CD4-positive, alpha-beta T cell (primary cell): ENCODE measurements at regions of chr9 and their contacts with region 1.

Region 1: DNA sequence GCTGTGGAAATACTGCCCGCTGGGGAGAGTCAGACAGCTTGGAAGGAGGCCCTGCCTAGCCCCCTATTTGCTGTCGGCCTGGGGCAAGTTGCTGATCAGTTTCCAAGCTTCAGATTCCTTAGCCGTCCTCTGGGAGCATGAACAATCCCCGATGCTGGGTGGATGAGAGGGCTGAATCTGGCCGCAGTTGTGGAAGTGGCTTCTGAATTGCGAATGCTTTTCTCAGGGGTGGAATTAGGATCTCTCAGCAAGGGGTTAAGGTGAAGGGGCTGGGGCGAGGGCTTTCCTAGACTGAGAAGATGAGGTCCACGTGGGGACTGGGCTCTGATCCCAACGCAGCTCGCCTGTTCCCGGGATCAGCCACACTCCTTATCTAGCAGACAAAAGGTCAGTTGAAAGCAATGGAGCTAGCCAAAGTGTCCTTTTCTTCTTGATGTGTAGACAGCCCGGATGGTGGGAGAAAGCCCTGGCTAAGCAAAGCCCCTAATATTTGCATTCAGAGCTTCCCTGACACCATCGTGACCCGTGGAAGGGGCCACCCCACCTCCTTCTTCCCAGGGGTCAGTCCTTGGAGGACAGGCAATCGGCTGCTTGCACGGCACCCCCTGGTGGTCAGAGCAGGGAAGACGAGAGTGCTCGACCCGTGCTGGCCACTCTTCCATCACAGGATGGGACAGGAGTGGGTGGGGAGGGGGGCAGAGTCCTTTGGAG is 54.9 kb downstream of the COL15A1 start:
- DNase-seq: peak; percentile 23 to 70 (median 42)
- ATAC-seq: peak; percentile 46
- H3K4me3 ChIP-seq: no peak overlapping the region
- H3K4me3 Mint-ChIP-seq: no peak overlapping the region
- H3K27ac ChIP-seq: no peak overlapping the region
- H3K27ac Mint-ChIP-seq: no peak overlapping the region
- H3K4me1 ChIP-seq: peaks cover 20% of the 10 kb centered on the region
- H3K4me1 Mint-ChIP-seq: peaks cover 26% of the 10 kb centered on the region
- H3K27me3 ChIP-seq: no peaks in the 10 kb centered on the region
- H3K27me3 Mint-ChIP-seq: no peaks in the 10 kb centered on the region
- CTCF ChIP-seq: peak; percentile 72

Region 2: DNA sequence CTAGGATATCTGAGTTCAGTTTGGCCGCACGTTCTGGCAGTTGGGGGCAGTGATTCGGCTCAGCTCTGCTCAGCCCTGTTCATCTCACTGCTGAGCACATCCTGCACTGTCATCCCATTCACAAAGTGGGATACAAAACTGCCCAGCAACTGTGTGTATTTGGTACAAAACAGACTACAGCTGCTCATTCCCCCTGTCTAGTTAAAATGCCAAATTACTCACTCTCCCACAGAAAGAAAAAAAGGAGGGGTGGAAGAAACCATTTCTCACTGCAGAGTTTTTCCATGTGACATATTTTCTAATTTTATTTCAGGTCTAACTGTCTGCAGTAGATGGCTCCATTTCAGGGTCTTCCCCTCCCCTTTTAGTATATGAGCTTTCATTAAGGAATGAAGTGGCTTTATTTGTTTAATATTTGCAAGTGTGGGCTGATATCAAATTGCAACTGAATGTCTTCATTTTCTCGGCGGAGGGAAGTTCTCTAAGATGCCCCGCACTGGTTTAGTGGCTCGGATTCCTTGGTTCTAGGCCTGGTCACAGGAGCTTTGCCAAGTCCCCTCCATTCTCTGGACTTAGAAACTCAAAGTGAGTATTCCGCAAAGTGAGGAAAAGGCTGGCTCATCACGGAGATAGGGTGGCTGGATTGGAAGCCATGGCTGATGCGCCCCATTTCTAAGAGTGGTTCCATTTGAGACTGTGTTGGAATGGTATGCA is 40.2 kb before region 1 on chr9:
- CTCF ChIA-PET with region 1: no interaction called
- POLR2A ChIA-PET with region 1: no interaction called
- intact Hi-C with region 1: no loop called
- DNase-seq: no peak
- ATAC-seq: no peak
- H3K4me3 ChIP-seq: no peak overlapping the region
- H3K4me3 Mint-ChIP-seq: no peak overlapping the region
- H3K27ac ChIP-seq: no peak overlapping the region
- H3K27ac Mint-ChIP-seq: no peak overlapping the region
- H3K4me1 ChIP-seq: no peaks in the 10 kb centered on the region
- H3K4me1 Mint-ChIP-seq: no peaks in the 10 kb centered on the region
- H3K27me3 ChIP-seq: no peaks in the 10 kb centered on the region
- H3K27me3 Mint-ChIP-seq: peaks cover 9% of the 10 kb centered on the region
- CTCF ChIP-seq: no peak

Region 3: DNA sequence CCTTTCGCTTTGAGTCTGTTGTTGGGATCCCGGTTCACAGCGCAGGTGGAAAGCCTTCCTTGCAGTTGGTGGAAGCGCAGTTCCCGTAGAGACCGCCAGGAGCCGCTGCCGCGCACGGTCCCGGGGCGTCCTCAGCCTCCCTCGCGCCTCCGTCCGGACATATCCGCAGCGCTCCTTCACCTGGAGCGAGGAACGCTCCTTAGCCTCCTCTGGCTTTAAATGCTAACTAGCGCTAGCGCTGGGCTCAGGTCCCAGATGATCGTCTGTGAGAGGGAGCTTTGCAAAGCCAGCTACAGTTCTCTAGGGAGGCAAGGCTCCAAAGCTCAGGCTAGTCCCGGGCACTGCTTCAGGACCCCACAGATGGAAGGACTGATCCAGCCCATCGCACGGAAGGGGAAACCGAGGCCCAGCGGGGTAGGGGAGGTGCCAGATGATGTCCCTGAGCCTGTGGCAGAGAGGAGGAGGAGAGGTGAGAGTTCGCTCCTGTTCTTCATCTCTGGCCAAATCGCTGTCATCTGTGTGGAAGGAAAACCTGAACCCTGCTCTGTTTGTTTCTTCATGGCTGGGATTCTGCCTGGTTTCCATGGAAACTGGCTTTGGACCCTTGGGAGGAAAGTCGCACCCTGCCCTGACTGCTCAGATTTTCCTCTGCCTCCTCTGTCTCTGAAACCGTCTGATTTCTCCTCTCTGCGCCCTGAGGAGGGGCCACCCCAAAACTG is 23.4 kb before region 1 on chr9:
- CTCF ChIA-PET with region 1: no interaction called
- POLR2A ChIA-PET with region 1: no interaction called
- intact Hi-C with region 1: loop called (anchors 1 to 2 kb)
- DNase-seq: peak; percentile 58 to 87 (median 74)
- ATAC-seq: peak; percentile 99
- H3K4me3 ChIP-seq: peak overlapping the region; percentile 25
- H3K4me3 Mint-ChIP-seq: peak overlapping the region; percentile 28
- H3K27ac ChIP-seq: no peak overlapping the region
- H3K27ac Mint-ChIP-seq: no peak overlapping the region
- H3K4me1 ChIP-seq: peaks cover 9% of the 10 kb centered on the region
- H3K4me1 Mint-ChIP-seq: no peaks in the 10 kb centered on the region
- H3K27me3 ChIP-seq: peaks cover 0 to 6% of the 10 kb centered on the region in 2 experiments
- H3K27me3 Mint-ChIP-seq: peaks cover 10% of the 10 kb centered on the region
- CTCF ChIP-seq: peak; percentile 97